Activated T-helper 1 cell treated with anti-CD3 and anti-CD28 coated beads, Interleukin-12 subunit alpha, Interleukin-12 subunit beta, Interleukin-2, Interleukin-4 antibody, amounts not matched to agents 30 ng/mL and 10 ng/mL and 1 ng/mL, durations not matched to agents 14 hours and 24 hours and 36 hours (primary cell): ENCODE measurements at regions of chr11 and their contacts with region 1.

Region 1: GRCh38 chr11:9613118-9613829 is 39.8 kb downstream of the WEE1 start:
- DNase-seq: peak; percentile 80
- H3K4me3 Mint-ChIP-seq: peak overlapping the region; percentile 89
- H3K27ac Mint-ChIP-seq: peak overlapping the region; percentile 99
- H3K4me1 Mint-ChIP-seq: peaks cover 44% of the 10 kb centered on the region
- H3K27me3 Mint-ChIP-seq: peaks cover 1% of the 10 kb centered on the region

Region 2: GRCh38 chr11:9003573-9004309 is 609.5 kb before region 1 on chr11 and contains the start of gene NRIP3:
- intact Hi-C with region 1: loop called (anchors 5 kb)
- DNase-seq: peak; percentile 73
- H3K4me3 Mint-ChIP-seq: peak within 1 kb of the TSS; percentile 83
- H3K27ac Mint-ChIP-seq: peak within 1 kb of the TSS; percentile 76
- H3K4me1 Mint-ChIP-seq: peaks cover 31% of the 10 kb centered on the region
- H3K27me3 Mint-ChIP-seq: peaks cover 36% of the 10 kb centered on the region
- total RNA-seq, gene NRIP3: 4.4 and 4.8 TPM in 2 replicates

Region 3: DNA sequence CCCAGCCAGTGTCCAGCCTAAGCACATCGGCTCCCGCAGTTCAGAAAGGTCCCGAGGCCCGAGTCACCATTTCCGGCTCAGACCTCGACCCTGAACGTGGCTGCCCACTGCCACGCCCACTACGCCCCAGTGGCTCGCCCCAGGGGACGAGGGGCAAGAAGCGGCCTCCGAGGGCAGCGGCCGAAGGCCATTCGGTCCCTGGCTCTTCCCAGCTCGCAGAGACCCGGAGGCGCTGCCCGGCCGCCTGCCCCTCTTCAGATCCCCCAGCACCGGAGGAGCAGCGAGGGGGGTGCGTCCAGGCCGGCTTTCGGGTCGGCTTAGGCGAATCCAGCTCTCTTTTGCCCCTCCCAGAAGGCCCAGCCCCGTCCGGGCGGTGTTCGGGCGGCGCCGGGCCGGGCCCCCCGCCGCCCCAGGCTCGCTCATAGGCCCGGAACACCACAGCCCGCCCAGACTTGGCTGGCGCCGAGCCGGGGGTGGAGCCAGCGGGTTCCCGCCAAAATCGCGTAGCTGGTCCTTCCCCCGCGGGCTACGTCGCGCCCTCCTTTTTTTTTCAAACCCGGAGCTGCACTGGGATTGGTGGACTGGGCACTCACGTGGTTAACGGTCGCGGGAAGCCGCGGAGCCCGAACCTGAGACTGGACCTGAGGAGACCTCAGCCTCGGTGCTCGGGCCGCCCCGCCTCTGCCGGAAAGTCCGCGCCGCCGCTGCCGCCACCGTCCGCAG is 40.1 kb before region 1 on chr11 and contains the start of gene WEE1:
- intact Hi-C with region 1: loop called (anchors 1 kb)
- DNase-seq: peak; percentile 99
- H3K4me3 Mint-ChIP-seq: peak within 1 kb of the TSS; percentile 93
- H3K27ac Mint-ChIP-seq: peak within 1 kb of the TSS; percentile 88
- H3K4me1 Mint-ChIP-seq: peaks cover 42% of the 10 kb centered on the region
- H3K27me3 Mint-ChIP-seq: peaks cover 7% of the 10 kb centered on the region
- total RNA-seq, gene WEE1: 51.4 and 54.2 TPM in 2 replicates

Region 4: DNA sequence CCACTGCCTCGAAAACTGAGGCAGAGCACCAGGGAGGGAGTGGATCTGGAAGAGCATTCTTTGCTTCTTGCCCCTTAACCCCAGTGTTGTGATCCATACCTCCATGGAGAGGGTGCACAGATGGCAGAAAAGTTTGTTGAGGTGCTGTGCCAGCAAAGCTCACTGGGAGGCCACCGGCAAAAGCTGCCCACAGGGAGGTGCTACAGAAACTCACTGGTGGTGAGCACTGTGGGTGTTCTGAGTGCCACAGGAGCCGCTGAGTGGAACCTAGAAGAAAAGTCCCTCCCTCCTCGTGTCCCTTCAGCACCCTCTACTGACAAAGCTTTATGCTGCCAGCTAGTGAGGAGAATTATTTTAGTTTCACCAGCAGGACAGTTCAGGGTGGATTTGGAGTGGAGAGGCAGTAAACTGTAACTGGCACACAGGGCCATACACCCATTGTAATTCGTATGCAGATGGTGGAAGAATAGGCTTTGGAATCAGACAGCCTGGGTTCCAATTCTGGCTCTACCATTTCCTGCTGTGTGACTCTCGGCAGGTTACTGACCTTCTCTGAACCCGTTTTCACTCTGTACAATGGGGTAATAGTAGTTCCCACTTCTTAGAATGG is 135.2 kb after region 1 on chr11:
- intact Hi-C with region 1: loop called (anchors 1 kb)
- DNase-seq: peak; percentile 66
- H3K4me3 Mint-ChIP-seq: no peak overlapping the region
- H3K27ac Mint-ChIP-seq: no peak overlapping the region
- H3K4me1 Mint-ChIP-seq: peaks cover 34% of the 10 kb centered on the region
- H3K27me3 Mint-ChIP-seq: peaks cover 2% of the 10 kb centered on the region

Region 5: GRCh38 chr11:9765320-9766020 is 152.2 kb after region 1 on chr11:
- intact Hi-C with region 1: no loop called
- DNase-seq: no peak
- H3K4me3 Mint-ChIP-seq: no peak overlapping the region
- H3K27ac Mint-ChIP-seq: no peak overlapping the region
- H3K4me1 Mint-ChIP-seq: peaks cover 17% of the 10 kb centered on the region
- H3K27me3 Mint-ChIP-seq: no peaks in the 10 kb centered on the region

Region 6: DNA sequence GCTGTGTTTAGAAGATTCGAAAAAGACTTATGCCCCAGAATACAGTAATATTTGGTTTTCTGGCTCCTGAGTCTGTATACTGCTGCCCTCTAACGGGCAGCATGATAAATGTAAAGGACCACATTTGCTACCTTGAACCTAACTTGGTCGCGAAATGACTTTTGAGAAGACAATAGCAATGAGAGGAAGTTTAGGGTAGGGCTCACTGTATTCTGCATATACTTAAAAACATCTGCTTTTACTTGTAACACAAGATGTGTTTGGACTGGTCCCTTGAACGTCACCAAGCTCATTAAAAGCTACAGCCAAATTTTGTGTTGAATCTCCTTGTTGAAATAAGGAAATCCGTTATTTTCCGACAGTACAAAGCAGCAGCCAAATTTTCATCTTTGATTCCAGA is 359.7 kb after region 1 on chr11:
- intact Hi-C with region 1: loop called (anchors 1 kb)
- DNase-seq: peak; percentile 9
- H3K4me3 Mint-ChIP-seq: no peak overlapping the region
- H3K27ac Mint-ChIP-seq: no peak overlapping the region
- H3K4me1 Mint-ChIP-seq: no peaks in the 10 kb centered on the region
- H3K27me3 Mint-ChIP-seq: peaks cover 5% of the 10 kb centered on the region